Heart left ventricle (tissue), 16 donors: ENCODE measurements at regions of chr5 and their contacts with region 1.

Region 1: DNA sequence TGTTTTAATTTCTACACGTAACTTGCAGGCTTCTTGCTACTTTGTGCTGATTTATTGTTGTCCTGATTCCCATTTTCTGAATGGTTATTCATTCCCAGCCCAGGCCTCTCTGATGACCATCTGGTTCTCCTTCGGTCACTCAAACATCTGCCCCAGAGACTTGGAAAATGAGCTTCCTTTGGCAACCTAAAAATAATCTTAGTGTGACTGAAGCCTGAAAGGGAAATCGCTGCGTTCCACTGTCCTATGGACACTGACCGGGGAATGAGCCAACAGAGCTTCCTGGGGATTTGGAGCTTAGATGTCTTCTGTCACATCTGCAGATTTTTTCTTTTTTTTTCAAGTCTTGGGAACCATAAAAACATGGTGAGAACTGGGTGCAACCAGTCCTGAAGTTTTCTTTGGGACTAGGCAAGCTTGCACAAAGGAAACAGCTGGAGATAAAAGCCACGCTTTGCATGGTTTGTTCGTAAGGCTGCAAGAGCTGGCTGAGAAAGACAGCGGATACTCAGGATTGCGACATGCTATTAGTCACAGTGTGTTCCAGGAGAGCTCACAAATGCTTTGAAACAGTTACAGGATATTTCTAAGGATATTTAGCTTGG is 146.3 kb downstream of the GOLPH3 start:
- DNase-seq: peak in 4 of 5 donors; percentile 74 to 82 (median 79)
- ATAC-seq: peak; percentile 84 to 96 (median 92)
- H3K4me3 ChIP-seq: peak overlapping the region in 6 of 12 donors; percentile 8 to 23 (median 14)
- H3K27ac ChIP-seq: peak overlapping the region; percentile 66 to 87 (median 79)
- H3K4me1 ChIP-seq: peaks cover 19 to 71% (median 57%) of the 10 kb centered on the region in 12 donors
- H3K27me3 ChIP-seq: no peaks in the 10 kb centered on the region
- CTCF ChIP-seq: no peak
- POLR2A ChIP-seq: no peak

Region 2: GRCh38 chr5:31854181-31855133 is 173.4 kb before region 1 on chr5:
- intact Hi-C with region 1: loop called in 4 of 10 experiments (anchors 5 to 10 kb)
- DNase-seq: peak; percentile 47 to 78 (median 64)
- ATAC-seq: peak; percentile 71 to 83 (median 76)
- H3K4me3 ChIP-seq: peak overlapping the region; percentile 42 to 72 (median 66)
- H3K27ac ChIP-seq: peak overlapping the region; percentile 71 to 93 (median 81)
- H3K4me1 ChIP-seq: peaks cover under 1 to 48% (median 25%) of the 10 kb centered on the region in 12 donors
- H3K27me3 ChIP-seq: peaks cover 0 to 17% (median 0%) of the 10 kb centered on the region in 9 donors
- CTCF ChIP-seq: no peak
- POLR2A ChIP-seq: no peak

Region 3: DNA sequence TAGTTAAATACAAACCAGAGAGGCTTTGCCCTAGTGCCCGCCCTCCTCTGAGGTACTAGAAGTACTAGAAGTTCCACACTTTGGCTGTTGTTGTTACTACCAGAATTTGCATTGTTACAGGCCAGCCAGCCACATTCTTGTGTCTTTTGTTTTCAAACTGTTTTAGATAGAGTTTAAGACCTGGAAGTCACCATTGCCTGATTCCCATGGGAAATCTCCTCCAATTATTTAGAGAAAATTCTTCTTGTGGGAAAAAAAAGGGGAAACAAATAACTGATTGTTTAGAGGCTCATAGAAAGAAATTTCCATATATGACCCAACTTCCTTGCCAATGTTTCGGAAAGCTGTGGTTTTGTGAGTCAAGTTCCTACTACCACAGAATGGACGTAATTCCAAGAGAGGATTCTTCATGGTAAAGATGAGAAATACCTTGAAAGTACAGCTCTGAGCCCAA is 105.9 kb before region 1 on chr5:
- intact Hi-C with region 1: loop called in 1 of 10 experiments (anchors 5 kb)
- DNase-seq: no peak
- ATAC-seq: peak; percentile 16 to 32 (median 28)
- H3K4me3 ChIP-seq: no peak overlapping the region
- H3K27ac ChIP-seq: peak overlapping the region in 7 of 12 donors; percentile 3 to 56 (median 35)
- H3K4me1 ChIP-seq: peaks cover 0 to 33% (median 10%) of the 10 kb centered on the region in 12 donors
- H3K27me3 ChIP-seq: no peaks in the 10 kb centered on the region
- CTCF ChIP-seq: no peak
- POLR2A ChIP-seq: no peak